Sigmoid colon (tissue), 7 donors: ENCODE measurements at regions of chr7 and their contacts with region 1.

Region 1: GRCh38 chr7:106659963-106660861 is 746 bp downstream of the CCDC71L start:
- DNase-seq: peak; percentile 86
- H3K4me3 ChIP-seq: peak overlapping the region; percentile 70 to 90 (median 76)
- H3K27ac ChIP-seq: peak overlapping the region; percentile 93 to 97 (median 94)
- H3K4me1 ChIP-seq: peaks cover 0 to 28% (median 20%) of the 10 kb centered on the region in 4 donors
- H3K27me3 ChIP-seq: no peaks in the 10 kb centered on the region
- CTCF ChIP-seq: peak; percentile 6 to 82 (median 50)
- EP300 ChIP-seq: no peak
- POLR2A ChIP-seq: no peak

Region 2: DNA sequence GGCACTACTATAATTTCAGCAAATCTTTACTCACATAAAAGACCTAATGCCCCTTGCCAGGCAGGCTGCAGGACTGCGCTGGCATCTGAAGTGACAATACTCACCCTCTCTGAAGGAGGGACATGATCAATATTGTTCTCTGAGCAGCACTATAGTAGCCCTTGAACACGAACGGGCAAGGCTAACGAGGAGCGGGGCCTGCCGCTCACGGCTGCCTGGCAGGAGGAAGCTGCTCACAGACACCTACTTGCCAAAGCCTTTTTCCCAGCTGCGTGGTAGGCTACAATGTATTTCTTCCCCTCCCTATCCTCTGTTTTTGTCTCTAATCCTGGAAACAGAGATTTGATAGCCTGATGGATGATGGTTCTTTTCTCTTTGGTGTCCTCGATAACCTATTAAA is 1158.0 kb before region 1 on chr7:
- intact Hi-C with region 1: no loop called
- DNase-seq: no peak
- H3K4me3 ChIP-seq: no peak overlapping the region
- H3K27ac ChIP-seq: no peak overlapping the region
- H3K4me1 ChIP-seq: no peaks in the 10 kb centered on the region
- H3K27me3 ChIP-seq: no peaks in the 10 kb centered on the region
- CTCF ChIP-seq: no peak
- EP300 ChIP-seq: no peak
- POLR2A ChIP-seq: no peak

Region 3: DNA sequence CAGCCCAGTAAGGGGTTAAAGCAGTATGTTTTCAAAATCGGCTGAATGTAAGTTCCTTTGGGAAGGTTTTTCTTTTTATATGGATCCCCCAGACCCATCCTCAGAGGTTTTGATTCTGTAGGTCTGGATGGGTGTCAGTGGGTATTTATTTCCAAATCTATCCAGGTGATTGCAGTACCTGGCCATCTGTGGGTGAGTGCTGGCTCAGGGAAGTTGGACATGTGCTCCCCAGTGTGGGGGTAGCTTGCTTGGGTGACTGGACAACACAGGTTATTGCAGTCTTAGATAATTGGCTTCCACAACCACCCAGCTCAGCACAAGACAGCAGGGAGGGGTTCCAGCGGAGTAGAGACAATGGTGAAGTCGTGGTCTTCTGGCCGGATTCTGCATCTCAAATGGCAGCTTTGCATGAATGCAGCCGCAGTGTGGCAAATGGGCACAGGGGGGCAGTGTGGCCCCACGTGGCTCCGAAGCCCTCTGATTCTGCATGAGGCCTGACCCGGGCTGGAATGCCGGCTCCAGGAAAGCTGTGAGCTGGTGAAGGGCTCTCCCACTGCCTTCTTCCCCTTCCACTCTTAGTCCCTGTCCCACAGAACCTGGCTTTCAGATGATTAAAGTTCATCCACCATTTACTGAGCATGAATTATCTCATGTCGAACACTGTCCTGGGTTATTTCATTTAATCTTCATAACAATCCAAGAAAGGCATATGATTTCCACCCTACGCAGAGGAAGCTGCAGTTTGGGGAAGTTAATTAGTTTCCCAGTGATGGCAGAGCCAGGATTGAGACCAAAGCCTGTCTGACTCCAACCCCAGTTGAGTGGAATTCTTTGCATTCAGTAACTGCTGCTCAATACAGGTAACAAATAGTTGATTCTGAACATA is 483.6 kb before region 1 on chr7:
- intact Hi-C with region 1: loop called (anchors 5 kb)
- DNase-seq: peak; percentile 90
- H3K4me3 ChIP-seq: no peak overlapping the region
- H3K27ac ChIP-seq: no peak overlapping the region
- H3K4me1 ChIP-seq: peaks cover 0 to 9% (median 5%) of the 10 kb centered on the region in 4 donors
- H3K27me3 ChIP-seq: no peaks in the 10 kb centered on the region
- CTCF ChIP-seq: peak; percentile 90 to 95 (median 92)
- EP300 ChIP-seq: no peak
- POLR2A ChIP-seq: no peak

Region 4: GRCh38 chr7:106285051-106285854 is 375.0 kb before region 1 on chr7:
- intact Hi-C with region 1: loop called (anchors 5 kb)
- DNase-seq: peak; percentile 99
- H3K4me3 ChIP-seq: peak overlapping the region; percentile 82 to 87 (median 86)
- H3K27ac ChIP-seq: peak overlapping the region; percentile 98 to 99 (median 98)
- H3K4me1 ChIP-seq: peaks cover 0 to 31% (median 15%) of the 10 kb centered on the region in 4 donors
- H3K27me3 ChIP-seq: no peaks in the 10 kb centered on the region
- CTCF ChIP-seq: no peak
- EP300 ChIP-seq: peak; percentile 74 to 98 (median 82)
- POLR2A ChIP-seq: peak in 1 of 2 donors; percentile 56

Region 5: DNA sequence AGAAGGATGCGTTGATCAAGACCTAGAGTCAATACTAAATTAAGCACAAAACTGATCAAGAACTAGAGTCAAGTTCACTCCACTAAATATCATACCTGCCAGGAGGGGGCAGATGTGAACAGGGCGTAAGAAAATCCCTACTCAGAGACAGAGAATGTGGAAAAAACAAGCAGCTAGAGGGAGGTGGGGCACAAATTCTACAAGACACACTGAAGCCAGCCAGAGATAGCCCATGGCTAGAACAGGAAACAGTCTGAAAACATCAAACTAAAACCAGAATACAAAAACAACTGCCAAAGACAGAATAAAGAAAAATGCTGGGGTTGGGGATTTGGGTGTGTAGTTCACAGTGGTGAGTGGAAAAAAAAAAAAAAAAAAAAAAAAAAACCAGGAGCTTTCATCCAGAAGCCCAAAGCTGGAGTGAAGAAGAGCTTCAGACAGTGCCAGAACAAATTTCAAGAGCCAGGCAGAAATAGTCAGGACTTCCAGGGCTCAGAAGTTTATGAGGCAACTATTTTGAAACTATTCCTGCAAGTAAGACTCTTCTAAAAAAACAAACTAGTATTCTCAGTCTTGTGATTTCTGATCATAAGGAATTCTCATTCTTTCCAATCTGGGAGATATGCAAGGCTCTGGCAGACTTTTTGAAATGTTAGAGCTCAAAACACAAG is 117.5 kb before region 1 on chr7:
- intact Hi-C with region 1: loop called (anchors 2 kb)
- DNase-seq: peak; percentile 75
- H3K4me3 ChIP-seq: no peak overlapping the region
- H3K27ac ChIP-seq: peak overlapping the region; percentile 65 to 80 (median 68)
- H3K4me1 ChIP-seq: peaks cover 0 to 34% (median 27%) of the 10 kb centered on the region in 4 donors
- H3K27me3 ChIP-seq: no peaks in the 10 kb centered on the region
- CTCF ChIP-seq: peak in 3 of 4 experiments; percentile 31 to 72 (median 51)
- EP300 ChIP-seq: peak in 1 of 4 donors; percentile 23
- POLR2A ChIP-seq: no peak

Region 6: GRCh38 chr7:106598663-106599342 is 61.4 kb before region 1 on chr7:
- intact Hi-C with region 1: no loop called
- DNase-seq: peak; percentile 68
- H3K4me3 ChIP-seq: peak overlapping the region in 3 of 4 donors; percentile 10 to 39 (median 28)
- H3K27ac ChIP-seq: peak overlapping the region in 1 of 4 donors; percentile 30
- H3K4me1 ChIP-seq: no peaks in the 10 kb centered on the region
- H3K27me3 ChIP-seq: no peaks in the 10 kb centered on the region
- CTCF ChIP-seq: no peak
- EP300 ChIP-seq: no peak
- POLR2A ChIP-seq: no peak

Region 7: GRCh38 chr7:106736508-106737201 is 76.4 kb after region 1 on chr7:
- intact Hi-C with region 1: loop called (anchors 1 kb)
- DNase-seq: no peak
- H3K4me3 ChIP-seq: peak overlapping the region in 1 of 4 donors; percentile 14
- H3K27ac ChIP-seq: no peak overlapping the region
- H3K4me1 ChIP-seq: peaks cover 0 to 7% (median 0%) of the 10 kb centered on the region in 4 donors
- H3K27me3 ChIP-seq: no peaks in the 10 kb centered on the region
- CTCF ChIP-seq: peak in 3 of 4 experiments; percentile 52 to 60 (median 59)
- EP300 ChIP-seq: no peak
- POLR2A ChIP-seq: no peak

Region 8: GRCh38 chr7:107044347-107045194 is 384.4 kb after region 1 on chr7 and contains the start of gene PRKAR2B:
- intact Hi-C with region 1: loop called (anchors 10 kb)
- DNase-seq: peak; percentile 89
- H3K4me3 ChIP-seq: peak within 1 kb of the TSS; percentile 66 to 90 (median 77)
- H3K27ac ChIP-seq: peak within 1 kb of the TSS; percentile 76 to 89 (median 83)
- H3K4me1 ChIP-seq: peaks cover 0 to 21% (median 14%) of the 10 kb centered on the region in 4 donors
- H3K27me3 ChIP-seq: no peaks in the 10 kb centered on the region
- CTCF ChIP-seq: no peak
- EP300 ChIP-seq: no peak
- POLR2A ChIP-seq: no peak
- total RNA-seq, gene PRKAR2B: 20.2 to 40.0 (median 31.2) TPM

Region 9: GRCh38 chr7:107150375-107151073 is 490.3 kb after region 1 on chr7:
- intact Hi-C with region 1: loop called (anchors 5 kb)
- DNase-seq: peak; percentile 86
- H3K4me3 ChIP-seq: no peak overlapping the region
- H3K27ac ChIP-seq: no peak overlapping the region
- H3K4me1 ChIP-seq: no peaks in the 10 kb centered on the region
- H3K27me3 ChIP-seq: no peaks in the 10 kb centered on the region
- CTCF ChIP-seq: peak in 3 of 4 experiments; percentile 28 to 57 (median 50)
- EP300 ChIP-seq: no peak
- POLR2A ChIP-seq: no peak